Activated CD4-positive, alpha-beta memory T cell treated with anti-CD3 and anti-CD28 coated beads for 36 hours (primary cell): ENCODE measurements at regions of chr16 and their contacts with region 1.

Region 1: GRCh38 chr16:27367461-27368357 is 34.3 kb upstream of the IL21R start:
- DNase-seq: peak; percentile 95
- H3K4me3 Mint-ChIP-seq: peak overlapping the region; percentile 54
- H3K27ac Mint-ChIP-seq: peak overlapping the region; percentile 98
- H3K4me1 Mint-ChIP-seq: peaks cover 70% of the 10 kb centered on the region
- H3K27me3 Mint-ChIP-seq: no peaks in the 10 kb centered on the region

Region 2: GRCh38 chr16:26598061-26598460 is 769.6 kb before region 1 on chr16:
- CTCF ChIA-PET with region 1: no interaction called
- POLR2A ChIA-PET with region 1: no interaction called
- intact Hi-C with region 1: loop called (anchors 1 kb)
- DNase-seq: peak; percentile 82
- H3K4me3 Mint-ChIP-seq: no peak overlapping the region
- H3K27ac Mint-ChIP-seq: peak overlapping the region; percentile 89
- H3K4me1 Mint-ChIP-seq: peaks cover 37% of the 10 kb centered on the region
- H3K27me3 Mint-ChIP-seq: peaks cover 18% of the 10 kb centered on the region

Region 3: DNA sequence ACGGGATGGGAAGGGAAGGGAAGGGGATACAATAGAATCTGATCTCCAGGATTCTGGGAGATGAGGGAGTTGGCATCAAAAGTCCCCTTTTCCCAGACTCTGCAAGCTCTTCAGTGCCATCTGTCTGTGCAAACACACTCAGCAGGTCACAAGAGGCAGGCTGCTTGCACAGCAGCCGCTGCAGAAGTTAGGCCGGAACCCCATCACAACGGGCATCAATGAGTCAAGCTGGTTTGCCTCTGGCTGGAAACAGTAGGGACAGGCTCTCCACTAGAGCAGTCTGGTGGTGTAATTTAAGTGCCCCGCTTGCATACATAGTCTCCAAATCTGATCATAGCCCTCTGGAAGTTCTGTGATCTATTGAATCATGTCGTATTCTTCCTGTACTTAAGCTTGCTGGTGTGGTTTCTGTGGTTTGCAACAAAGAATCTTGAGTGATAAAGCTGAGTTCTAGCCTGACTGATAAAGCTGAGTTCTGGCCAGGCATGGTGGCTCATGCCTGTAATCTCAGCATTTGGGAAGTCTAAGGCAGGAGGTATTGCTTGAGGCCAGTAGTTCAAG is 198.1 kb before region 1 on chr16:
- CTCF ChIA-PET with region 1: interaction called, 14 read pairs
- POLR2A ChIA-PET with region 1: interaction called, 6 read pairs
- intact Hi-C with region 1: loop called (anchors 1 kb)
- DNase-seq: peak; percentile 90
- H3K4me3 Mint-ChIP-seq: peak overlapping the region; percentile 9
- H3K27ac Mint-ChIP-seq: peak overlapping the region; percentile 79
- H3K4me1 Mint-ChIP-seq: peaks cover 57% of the 10 kb centered on the region
- H3K27me3 Mint-ChIP-seq: no peaks in the 10 kb centered on the region

Region 4: GRCh38 chr16:27203429-27204231 is 164.1 kb before region 1 on chr16 and contains the start of gene KDM8:
- CTCF ChIA-PET with region 1: interaction called, 6 read pairs
- POLR2A ChIA-PET with region 1: interaction called, 15 read pairs
- intact Hi-C with region 1: loop called (anchors 1 kb)
- DNase-seq: peak; percentile 100
- H3K4me3 Mint-ChIP-seq: peak within 1 kb of the TSS; percentile 95
- H3K27ac Mint-ChIP-seq: peak within 1 kb of the TSS; percentile 97
- H3K4me1 Mint-ChIP-seq: peaks cover 47% of the 10 kb centered on the region
- H3K27me3 Mint-ChIP-seq: no peaks in the 10 kb centered on the region
- total RNA-seq, gene KDM8: 8.7 to 9.7 TPM

Region 5: GRCh38 chr16:27313422-27314160 is 54.1 kb before region 1 on chr16 and contains the start of gene IL4R:
- CTCF ChIA-PET with region 1: interaction called, 15 read pairs
- POLR2A ChIA-PET with region 1: interaction called, 58 read pairs
- intact Hi-C with region 1: loop called (anchors 1 kb)
- DNase-seq: peak; percentile 86
- H3K4me3 Mint-ChIP-seq: peak within 1 kb of the TSS; percentile 94
- H3K27ac Mint-ChIP-seq: peak within 1 kb of the TSS; percentile 96
- H3K4me1 Mint-ChIP-seq: peaks cover 41% of the 10 kb centered on the region
- H3K27me3 Mint-ChIP-seq: no peaks in the 10 kb centered on the region
- total RNA-seq, gene IL4R: 146 to 153 TPM

Region 6: GRCh38 chr16:27387724-27388123 is 20.0 kb after region 1 on chr16:
- CTCF ChIA-PET with region 1: interaction called, 11 read pairs
- POLR2A ChIA-PET with region 1: interaction called, 4 read pairs
- intact Hi-C with region 1: no loop called
- DNase-seq: no peak
- H3K4me3 Mint-ChIP-seq: no peak overlapping the region
- H3K27ac Mint-ChIP-seq: peak overlapping the region; percentile 39
- H3K4me1 Mint-ChIP-seq: peaks cover 18% of the 10 kb centered on the region
- H3K27me3 Mint-ChIP-seq: no peaks in the 10 kb centered on the region

Region 7: DNA sequence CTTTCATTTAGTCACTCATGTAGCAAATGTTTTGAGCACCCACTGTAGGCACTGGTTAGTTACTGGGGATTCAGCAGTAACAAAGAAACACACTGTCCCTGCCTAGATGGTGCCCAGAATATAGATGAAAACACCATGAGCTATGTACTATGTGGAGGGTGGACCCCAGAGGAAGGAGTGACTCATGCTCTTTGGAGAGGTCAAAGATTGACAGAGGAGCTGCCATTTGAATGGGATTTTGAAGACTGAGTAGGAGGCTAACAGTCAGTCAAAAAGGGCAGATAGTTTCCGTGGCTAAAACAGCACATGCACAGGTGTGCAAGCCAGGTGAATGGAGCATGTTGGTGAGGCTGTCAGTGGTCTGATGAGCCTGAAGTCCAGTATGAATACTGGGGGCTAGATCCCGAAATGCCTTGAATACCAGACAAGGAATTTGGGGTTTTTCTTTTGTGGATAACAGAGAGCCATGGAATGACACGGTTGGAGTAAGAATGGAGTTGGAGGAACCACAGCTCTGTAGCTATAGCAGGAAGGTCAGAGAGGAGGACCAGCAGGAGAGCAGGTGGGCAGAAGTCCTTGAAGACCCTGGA is 40.4 kb after region 1 on chr16:
- CTCF ChIA-PET with region 1: interaction called, 75 read pairs
- POLR2A ChIA-PET with region 1: interaction called, 87 read pairs
- intact Hi-C with region 1: loop called (anchors 1 kb)
- DNase-seq: peak; percentile 73
- H3K4me3 Mint-ChIP-seq: peak overlapping the region; percentile 100
- H3K27ac Mint-ChIP-seq: peak overlapping the region; percentile 96
- H3K4me1 Mint-ChIP-seq: peaks cover 71% of the 10 kb centered on the region
- H3K27me3 Mint-ChIP-seq: no peaks in the 10 kb centered on the region